Calu3 (cell line): ENCODE measurements at regions of chr5 and their contacts with region 1.

Region 1: DNA sequence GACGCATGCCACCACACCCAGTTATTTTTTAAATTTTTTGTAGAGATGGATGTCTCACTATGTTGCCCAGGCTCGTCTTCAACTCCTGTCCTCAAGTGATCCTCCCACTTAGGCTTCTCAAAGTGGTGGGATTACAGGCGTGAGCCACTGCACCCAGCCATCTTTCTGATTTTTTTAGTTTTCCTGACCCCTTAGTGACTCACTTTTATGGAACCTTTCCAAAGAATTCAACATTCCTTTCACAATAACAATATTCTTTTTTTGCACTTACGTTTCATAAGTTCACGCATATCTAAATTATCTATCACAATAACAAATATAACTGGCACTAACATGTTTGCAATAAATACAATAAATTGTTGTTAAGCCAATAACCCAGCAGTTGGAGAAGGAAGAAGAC is 8.5 kb downstream of the ELOVL7 start:
- DNase-seq: no peak
- H3K4me3 Mint-ChIP-seq: no peak overlapping the region
- H3K27ac Mint-ChIP-seq: no peak overlapping the region
- H3K4me1 Mint-ChIP-seq: peaks cover 27% of the 10 kb centered on the region
- H3K27me3 Mint-ChIP-seq: no peaks in the 10 kb centered on the region
- CTCF ChIP-seq: no peak

Region 2: DNA sequence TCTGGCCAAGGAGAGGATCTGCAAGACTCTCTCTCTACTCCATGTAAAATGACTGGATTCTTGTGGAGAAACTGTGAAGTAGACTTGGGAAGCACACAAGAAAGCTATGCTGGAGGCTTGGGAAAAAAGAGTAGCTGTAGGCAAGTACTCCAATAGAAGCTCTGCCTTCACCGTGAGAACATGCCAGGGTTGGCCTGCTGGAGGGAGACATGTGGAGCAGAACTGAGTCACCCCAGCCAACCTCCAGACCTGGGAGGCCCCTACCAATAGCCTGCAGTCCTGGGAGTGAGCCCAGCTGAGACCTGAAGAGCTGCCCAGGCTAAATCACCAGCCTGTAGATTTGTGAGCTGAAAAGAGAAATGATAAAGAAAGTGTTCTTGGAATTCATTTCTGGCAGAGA is 202.2 kb before region 1 on chr5:
- CTCF ChIA-PET with region 1: no interaction called
- intact Hi-C with region 1: no loop called
- DNase-seq: no peak
- H3K4me3 Mint-ChIP-seq: no peak overlapping the region
- H3K27ac Mint-ChIP-seq: no peak overlapping the region
- H3K4me1 Mint-ChIP-seq: no peaks in the 10 kb centered on the region
- H3K27me3 Mint-ChIP-seq: no peaks in the 10 kb centered on the region
- CTCF ChIP-seq: no peak

Region 3: GRCh38 chr5:60803712-60804111 is 31.8 kb before region 1 on chr5:
- CTCF ChIA-PET with region 1: no interaction called
- intact Hi-C with region 1: loop called (anchors 5 kb)
- DNase-seq: no peak
- H3K4me3 Mint-ChIP-seq: no peak overlapping the region
- H3K27ac Mint-ChIP-seq: no peak overlapping the region
- H3K4me1 Mint-ChIP-seq: peaks cover 35% of the 10 kb centered on the region
- H3K27me3 Mint-ChIP-seq: no peaks in the 10 kb centered on the region
- CTCF ChIP-seq: no peak

Region 4: DNA sequence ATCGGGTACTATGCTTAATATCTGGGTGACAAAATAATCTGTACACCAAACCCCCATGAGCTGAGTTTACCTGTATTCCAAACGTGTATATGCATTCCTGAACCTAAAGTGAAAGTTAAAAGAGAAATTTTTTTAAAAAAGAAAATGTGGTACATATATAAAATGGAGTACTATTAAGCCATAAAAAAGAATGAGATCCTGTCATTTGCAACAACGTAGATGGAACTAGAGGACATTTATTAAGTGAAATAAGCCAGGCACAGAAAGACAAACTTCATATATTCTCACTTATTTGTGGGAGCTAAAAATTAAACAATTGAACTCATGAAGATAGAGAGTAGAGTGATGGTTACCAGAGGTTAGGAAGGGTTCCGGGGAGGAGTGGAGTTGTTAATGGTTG is 154.2 kb after region 1 on chr5:
- CTCF ChIA-PET with region 1: no interaction called
- intact Hi-C with region 1: no loop called
- DNase-seq: no peak
- H3K4me3 Mint-ChIP-seq: no peak overlapping the region
- H3K27ac Mint-ChIP-seq: no peak overlapping the region
- H3K4me1 Mint-ChIP-seq: no peaks in the 10 kb centered on the region
- H3K27me3 Mint-ChIP-seq: no peaks in the 10 kb centered on the region
- CTCF ChIP-seq: no peak